Colonic mucosa (tissue), 4 donors: ENCODE measurements at regions of chr2 and their contacts with region 1.

Region 1: DNA sequence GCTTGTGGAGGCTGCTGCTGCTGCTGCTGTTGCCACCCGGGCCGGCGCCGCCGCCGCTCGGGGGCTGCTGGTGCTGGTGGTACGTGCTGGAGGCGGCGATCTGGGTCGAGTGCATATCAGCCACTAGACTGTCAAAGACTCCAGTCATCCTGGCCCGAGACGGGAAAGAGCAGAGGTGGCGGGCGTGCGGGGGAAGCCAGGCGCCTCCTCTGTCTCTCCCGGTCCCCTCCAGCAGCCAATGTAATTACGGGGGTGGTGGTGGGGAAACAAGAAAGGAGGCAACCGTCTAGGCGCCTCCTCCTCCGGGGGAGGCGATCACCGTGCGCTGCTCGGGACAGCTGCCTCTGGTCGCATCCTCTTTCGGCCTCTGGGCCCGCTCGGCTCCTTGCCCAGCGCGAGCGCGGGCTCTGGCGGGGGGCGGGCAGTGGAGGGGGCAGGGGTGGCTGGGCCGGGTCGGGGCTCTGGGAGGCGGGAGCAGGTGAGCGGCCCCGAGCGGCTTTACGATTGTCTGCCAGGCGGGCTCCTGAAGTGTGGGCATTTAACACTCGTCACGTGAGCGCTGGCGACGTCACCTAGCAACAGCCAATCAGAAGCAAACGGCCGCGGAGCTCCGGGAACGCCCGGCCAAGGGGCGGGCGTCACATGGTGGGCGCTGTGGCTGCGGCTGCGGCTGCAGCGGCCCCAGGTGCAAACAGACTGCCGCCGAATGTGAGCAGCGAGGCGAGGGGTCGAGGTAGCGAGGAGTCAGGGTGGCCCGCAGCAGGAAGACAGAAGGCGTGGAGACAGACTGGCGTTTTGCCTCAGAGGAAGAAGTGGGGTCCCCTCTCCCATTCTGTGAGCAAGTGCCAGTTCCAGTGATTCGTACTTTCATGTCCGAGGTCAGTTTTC is at the start of gene DLX2:
- DNase-seq: peak; percentile 92
- H3K4me3 ChIP-seq: peak within 1 kb of the TSS; percentile 52
- H3K27ac ChIP-seq: no peak within 1 kb of the TSS
- H3K4me1 ChIP-seq: peaks cover 23% of the 10 kb centered on the region
- H3K27me3 ChIP-seq: peaks cover 96% of the 10 kb centered on the region
- CTCF ChIP-seq: no peak
- total RNA-seq, gene DLX2: not detected

Region 2: DNA sequence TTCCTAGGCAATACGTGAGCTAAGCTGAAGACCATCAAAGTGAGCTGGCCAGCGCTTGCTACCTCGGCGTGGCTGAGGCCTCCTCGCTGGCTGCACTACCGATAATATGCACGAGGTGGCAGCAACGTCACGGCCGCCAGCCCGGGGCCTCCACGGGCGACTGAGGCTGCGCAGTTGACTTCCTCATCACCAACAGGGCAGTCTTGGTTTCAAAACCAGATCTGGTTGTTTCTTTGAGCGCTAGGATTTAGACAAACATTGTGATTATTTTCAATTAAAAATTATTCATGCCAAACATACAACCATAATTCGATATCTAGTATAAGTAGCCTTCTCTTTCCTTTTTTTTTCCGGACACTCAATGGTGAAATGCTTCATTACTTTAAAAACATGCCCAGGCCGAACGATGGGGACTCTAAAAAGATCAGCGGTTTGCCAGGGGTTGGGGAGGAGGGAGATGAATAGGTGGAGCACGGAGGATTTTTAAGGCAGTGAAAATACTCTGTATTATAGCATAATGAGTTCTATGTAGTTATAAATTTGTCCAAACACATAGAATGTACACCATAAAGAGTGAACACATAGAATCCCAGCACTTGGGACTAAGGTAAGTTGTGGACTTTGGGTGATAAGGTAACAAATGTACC is 528.4 kb before region 1 on chr2:
- intact Hi-C with region 1: loop called (anchors 10 kb)
- DNase-seq: peak; percentile 77
- H3K4me3 ChIP-seq: no peak overlapping the region
- H3K27ac ChIP-seq: no peak overlapping the region
- H3K4me1 ChIP-seq: no peaks in the 10 kb centered on the region
- H3K27me3 ChIP-seq: no peaks in the 10 kb centered on the region
- CTCF ChIP-seq: peak; percentile 96

Region 3: DNA sequence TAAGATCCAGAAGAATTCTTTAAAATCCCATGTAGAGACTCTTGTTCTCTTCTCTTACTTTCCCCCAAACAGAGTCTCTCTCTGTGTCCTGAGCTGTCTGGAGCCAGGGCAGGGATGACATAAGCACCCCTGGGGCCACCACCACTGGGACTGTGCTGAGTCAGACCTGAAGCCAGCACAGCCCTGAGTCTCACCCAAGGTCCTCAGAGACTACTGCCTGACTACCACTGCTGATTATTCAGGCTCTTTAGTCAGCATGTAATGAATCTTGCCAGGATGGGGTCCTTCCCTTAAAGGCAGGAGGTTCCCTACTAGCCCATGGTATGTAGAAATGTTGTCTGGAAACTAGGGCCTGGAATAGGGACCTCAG is 450.2 kb before region 1 on chr2:
- intact Hi-C with region 1: no loop called
- DNase-seq: no peak
- H3K4me3 ChIP-seq: no peak overlapping the region
- H3K27ac ChIP-seq: no peak overlapping the region
- H3K4me1 ChIP-seq: no peaks in the 10 kb centered on the region
- H3K27me3 ChIP-seq: no peaks in the 10 kb centered on the region
- CTCF ChIP-seq: no peak

Region 4: GRCh38 chr2:171703574-171704347 is 398.9 kb before region 1 on chr2:
- intact Hi-C with region 1: loop called (anchors 10 kb)
- DNase-seq: no peak
- H3K4me3 ChIP-seq: no peak overlapping the region
- H3K27ac ChIP-seq: no peak overlapping the region
- H3K4me1 ChIP-seq: no peaks in the 10 kb centered on the region
- H3K27me3 ChIP-seq: no peaks in the 10 kb centered on the region
- CTCF ChIP-seq: peak; percentile 20

Region 5: GRCh38 chr2:171811245-171811628 is 291.4 kb before region 1 on chr2:
- intact Hi-C with region 1: loop called (anchors 5 kb)
- DNase-seq: no peak
- H3K4me3 ChIP-seq: no peak overlapping the region
- H3K27ac ChIP-seq: no peak overlapping the region
- H3K4me1 ChIP-seq: no peaks in the 10 kb centered on the region
- H3K27me3 ChIP-seq: no peaks in the 10 kb centered on the region
- CTCF ChIP-seq: no peak